CD4-positive, alpha-beta T cell (primary cell): ENCODE measurements at regions of chr12 and their contacts with region 1.

Region 1: GRCh38 chr12:57238854-57239554 is 9.5 kb downstream of the SHMT2 start:
- DNase-seq: peak; percentile 74 to 95 (median 82)
- ATAC-seq: peak; percentile 59
- H3K4me3 ChIP-seq: peak overlapping the region; percentile 82
- H3K4me3 Mint-ChIP-seq: peak overlapping the region; percentile 96
- H3K27ac ChIP-seq: no peak overlapping the region
- H3K27ac Mint-ChIP-seq: peak overlapping the region; percentile 68
- H3K4me1 ChIP-seq: peaks cover 94% of the 10 kb centered on the region
- H3K4me1 Mint-ChIP-seq: peaks cover 90% of the 10 kb centered on the region
- H3K27me3 ChIP-seq: peaks cover 62 to 63% of the 10 kb centered on the region in 2 experiments
- H3K27me3 Mint-ChIP-seq: peaks cover 79% of the 10 kb centered on the region
- CTCF ChIP-seq: peak; percentile 100

Region 2: DNA sequence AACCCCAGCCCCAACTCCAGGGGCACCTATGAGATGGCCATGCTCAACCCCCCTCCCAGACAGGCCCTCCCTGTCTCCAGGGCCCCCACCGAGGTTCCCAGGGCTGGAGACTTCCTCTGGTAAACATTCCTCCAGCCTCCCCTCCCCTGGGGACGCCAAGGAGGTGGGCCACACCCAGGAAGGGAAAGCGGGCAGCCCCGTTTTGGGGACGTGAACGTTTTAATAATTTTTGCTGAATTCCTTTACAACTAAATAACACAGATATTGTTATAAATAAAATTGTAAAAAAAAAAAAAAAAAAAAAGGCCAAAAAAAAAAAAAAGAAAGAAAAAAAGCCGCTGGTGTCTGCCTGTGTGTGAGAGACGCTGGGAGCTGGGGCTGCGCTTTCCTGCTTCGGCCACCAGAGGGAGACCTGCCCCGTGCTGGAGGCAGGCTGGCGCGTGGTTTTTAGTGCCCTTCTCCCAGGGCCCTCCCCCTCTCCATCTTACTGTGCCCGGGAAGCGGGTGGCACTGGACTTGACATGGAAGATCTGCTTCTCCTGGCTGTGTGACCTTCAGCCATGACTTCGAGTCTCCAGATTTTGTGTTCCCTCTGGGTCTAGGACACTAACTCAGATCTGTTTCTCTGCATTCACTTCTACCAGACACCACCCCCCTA is 25.8 kb before region 1 on chr12:
- CTCF ChIA-PET with region 1: interaction called, 225 read pairs
- POLR2A ChIA-PET with region 1: interaction called, 20 read pairs
- intact Hi-C with region 1: loop called (anchors 1 kb)
- DNase-seq: peak; percentile 72 to 92 (median 81)
- ATAC-seq: peak; percentile 75
- H3K4me3 ChIP-seq: no peak overlapping the region
- H3K4me3 Mint-ChIP-seq: peak overlapping the region; percentile 72
- H3K27ac ChIP-seq: no peak overlapping the region
- H3K27ac Mint-ChIP-seq: no peak overlapping the region
- H3K4me1 ChIP-seq: peaks cover 51% of the 10 kb centered on the region
- H3K4me1 Mint-ChIP-seq: peaks cover 42% of the 10 kb centered on the region
- H3K27me3 ChIP-seq: peaks cover 39 to 44% of the 10 kb centered on the region in 2 experiments
- H3K27me3 Mint-ChIP-seq: peaks cover 43% of the 10 kb centered on the region
- CTCF ChIP-seq: peak; percentile 94